ENCODE measurements at regions of chr15 and their contacts with region 1.

Region 1: GRCh38 chr15:83918011-83918410 is 264.1 kb downstream of the ADAMTSL3 start:
- DNase-seq: no peak
- H3K4me3 ChIP-seq: no peak overlapping the region
- H3K27ac ChIP-seq: no peak overlapping the region
- H3K4me1 ChIP-seq: no peaks in the 10 kb centered on the region
- H3K27me3 ChIP-seq: peaks cover 11% of the 10 kb centered on the region
- CTCF ChIP-seq: no peak

Region 2: DNA sequence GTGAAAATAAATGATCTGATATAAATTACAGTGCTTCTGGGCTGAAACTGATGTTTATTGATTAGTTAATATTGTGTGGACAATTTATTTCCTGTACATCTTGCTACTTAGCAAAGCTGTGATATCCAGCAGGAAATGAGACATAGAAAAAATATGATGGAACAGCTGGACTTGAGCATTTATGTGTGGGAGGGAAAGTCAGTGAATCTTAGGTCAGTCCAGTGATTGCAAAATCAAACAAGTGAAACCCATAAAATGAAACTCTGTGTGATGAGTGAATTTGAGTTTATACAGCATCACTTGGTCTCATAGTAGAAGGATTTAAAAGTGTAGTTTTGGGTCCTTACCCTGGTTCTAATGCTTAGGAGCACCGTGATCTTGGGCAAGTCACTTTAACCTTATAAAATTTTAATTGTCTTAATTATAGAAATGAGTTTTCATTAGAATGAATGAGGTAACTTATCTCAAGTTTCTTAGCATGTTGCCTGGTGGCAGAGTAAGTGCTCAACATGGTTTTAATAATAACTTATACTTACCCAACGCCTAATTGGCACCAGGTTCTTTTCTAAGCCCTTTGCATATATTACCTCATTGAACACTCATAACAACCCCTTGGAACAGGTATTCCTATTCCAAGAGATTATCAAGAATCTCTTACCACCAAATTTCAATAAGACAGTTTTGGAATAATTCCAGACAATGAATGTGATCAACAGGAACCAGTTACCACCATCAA is 69.5 kb before region 1 on chr15:
- CTCF ChIA-PET with region 1: no interaction called
- POLR2A ChIA-PET with region 1: no interaction called
- intact Hi-C with region 1: no loop called
- DNase-seq: peak; percentile 78
- H3K4me3 ChIP-seq: no peak overlapping the region
- H3K27ac ChIP-seq: no peak overlapping the region
- H3K4me1 ChIP-seq: peaks cover 18% of the 10 kb centered on the region
- H3K27me3 ChIP-seq: no peaks in the 10 kb centered on the region
- CTCF ChIP-seq: no peak

Region 3: GRCh38 chr15:83904107-83905040 is 13.6 kb before region 1 on chr15:
- CTCF ChIA-PET with region 1: interaction called, 10 read pairs
- POLR2A ChIA-PET with region 1: no interaction called
- intact Hi-C with region 1: no loop called
- DNase-seq: peak; percentile 71
- H3K4me3 ChIP-seq: no peak overlapping the region
- H3K27ac ChIP-seq: no peak overlapping the region
- H3K4me1 ChIP-seq: peaks cover 6% of the 10 kb centered on the region
- H3K27me3 ChIP-seq: peaks cover 9% of the 10 kb centered on the region
- CTCF ChIP-seq: no peak